ENCODE measurements at regions of chr21 and their contacts with region 1.

Region 1: DNA sequence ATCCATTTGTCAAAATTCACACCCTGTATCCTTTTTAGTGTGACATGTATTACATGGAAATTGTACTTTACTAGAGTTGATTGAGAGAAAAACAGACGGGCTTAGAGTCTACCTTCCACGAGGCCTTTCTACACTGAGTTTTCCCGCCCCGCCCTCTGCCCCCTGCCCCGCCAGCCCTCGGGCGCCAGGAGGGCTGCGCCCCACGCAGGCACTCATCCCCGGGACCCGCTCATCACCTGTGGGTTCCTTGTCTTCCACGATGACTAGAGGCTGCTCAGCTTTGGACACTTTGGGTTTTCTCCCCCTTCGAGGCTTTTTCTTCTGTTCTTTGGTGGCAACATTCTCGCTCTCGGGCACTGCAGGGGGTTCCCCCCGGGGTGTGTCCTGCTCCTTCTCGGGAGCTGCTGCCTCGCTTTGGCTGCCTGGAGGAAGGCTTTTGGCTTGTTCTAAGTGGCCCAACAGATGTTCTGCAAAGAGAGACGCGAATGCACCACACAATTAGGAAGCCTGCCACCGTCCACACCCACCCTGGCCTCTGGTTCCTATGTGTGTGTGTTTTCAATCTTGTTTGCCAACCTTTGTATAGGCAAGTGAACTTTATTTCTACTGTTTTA is 39.6 kb downstream of the PRDM15 start:
- DNase-seq: no peak
- H3K4me3 ChIP-seq: no peak overlapping the region
- H3K27ac ChIP-seq: no peak overlapping the region
- H3K4me1 ChIP-seq: no peaks in the 10 kb centered on the region
- H3K27me3 ChIP-seq: no peaks in the 10 kb centered on the region
- CTCF ChIP-seq: no peak
- POLR2A ChIP-seq: no peak

Region 2: DNA sequence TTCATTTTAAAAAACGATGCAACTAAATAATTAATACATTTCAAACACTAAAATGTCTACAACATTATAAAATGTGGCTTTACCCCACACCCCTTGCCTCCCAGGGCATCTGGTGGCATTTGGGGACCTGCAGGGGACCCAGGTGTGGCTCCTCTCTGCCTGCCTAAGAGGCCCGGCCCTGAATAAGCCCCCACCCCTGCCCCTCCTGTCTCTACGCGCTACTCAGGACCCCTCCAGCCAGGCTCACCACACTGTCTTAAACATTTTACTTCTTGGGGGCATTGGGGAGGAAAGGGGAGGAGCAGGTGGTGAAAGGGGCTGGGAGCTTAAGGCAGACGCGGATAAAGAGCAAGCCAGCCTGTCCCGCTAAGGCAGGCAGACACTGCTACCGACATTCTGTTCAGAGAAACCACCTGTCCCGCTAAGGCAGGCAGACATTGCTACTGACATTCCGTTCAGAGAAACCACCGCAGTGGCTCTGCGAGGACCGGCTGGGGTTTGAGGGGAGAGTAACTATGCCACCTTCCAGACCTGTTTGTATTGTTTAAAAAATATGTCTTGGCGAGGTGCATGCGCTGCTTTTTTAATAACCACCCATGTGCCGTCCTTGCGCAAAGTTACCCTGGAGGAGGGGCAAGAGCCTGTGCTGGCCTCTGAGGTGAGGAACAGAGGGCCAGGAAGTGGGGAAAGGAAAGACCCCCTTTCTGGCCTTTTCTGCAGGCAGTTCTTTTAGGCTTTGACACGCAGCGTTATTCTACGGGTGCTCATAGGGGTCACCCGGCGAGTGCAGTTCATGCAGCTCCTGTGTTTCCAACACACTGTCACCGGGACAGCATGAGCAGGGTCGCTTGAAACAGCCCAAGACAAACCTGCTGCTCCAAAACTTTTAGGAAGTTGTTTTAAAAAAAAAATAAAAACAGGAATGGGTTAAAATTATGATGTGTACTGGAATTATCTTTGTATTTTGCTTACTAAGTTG is 21.3 kb before region 1 on chr21:
- intact Hi-C with region 1: loop called (anchors 1 kb)
- DNase-seq: no peak
- H3K4me3 ChIP-seq: no peak overlapping the region
- H3K27ac ChIP-seq: no peak overlapping the region
- H3K4me1 ChIP-seq: no peaks in the 10 kb centered on the region
- H3K27me3 ChIP-seq: no peaks in the 10 kb centered on the region
- CTCF ChIP-seq: no peak
- POLR2A ChIP-seq: no peak

Measured in breast epithelium (tissue), 4 donors.